ENCODE measurements at regions of chr1 and their contacts with region 1.

Region 1: GRCh38 chr1:36187800-36188593 is 32.0 kb downstream of the MAP7D1 start:
- DNase-seq: peak; percentile 91
- ATAC-seq: peak; percentile 97
- H3K4me3 ChIP-seq: no peak overlapping the region
- H3K27ac ChIP-seq: peak overlapping the region; percentile 36
- H3K4me1 ChIP-seq: peaks cover 7% of the 10 kb centered on the region; the same call in 1 of the 2 replicates
- H3K27me3 ChIP-seq: no peaks in the 10 kb centered on the region
- CTCF ChIP-seq: peak; percentile 94

Region 2: DNA sequence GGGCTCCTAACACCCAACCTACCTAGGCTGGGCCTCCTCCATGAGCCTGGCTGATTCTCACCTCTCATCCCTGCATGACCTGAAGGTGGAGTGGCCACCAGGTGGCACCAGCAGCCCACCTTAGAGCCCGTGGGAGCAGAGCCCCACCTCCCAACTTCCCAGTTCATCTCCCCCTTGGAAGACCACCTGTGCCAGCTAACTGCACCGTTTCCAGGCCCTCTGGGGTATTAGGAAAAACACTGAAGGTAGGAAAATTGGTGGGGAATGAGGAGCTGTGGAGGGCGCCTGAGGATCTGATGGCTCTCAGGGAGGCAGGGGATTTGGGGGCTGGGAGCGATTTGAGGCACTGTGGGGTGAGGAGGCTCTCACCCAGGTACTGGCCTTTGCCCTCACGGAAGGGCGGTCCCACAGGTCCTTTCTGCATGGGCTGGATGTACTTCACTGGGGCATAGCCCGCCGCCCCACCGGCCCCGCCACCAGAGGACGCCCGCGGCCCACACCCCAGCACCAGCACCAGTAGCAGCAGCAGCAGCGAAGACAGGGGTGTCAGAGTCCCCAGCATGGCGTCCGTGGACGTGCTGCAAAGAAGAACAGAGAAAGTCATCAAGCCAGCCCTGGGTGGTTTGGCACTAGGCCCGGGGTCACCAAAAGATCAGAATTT is 88.2 kb before region 1 on chr1:
- CTCF ChIA-PET with region 1: no interaction called
- POLR2A ChIA-PET with region 1: no interaction called
- intact Hi-C with region 1: loop called (anchors 1 kb)
- DNase-seq: peak; percentile 85
- ATAC-seq: peak; percentile 90
- H3K4me3 ChIP-seq: no peak overlapping the region
- H3K27ac ChIP-seq: no peak overlapping the region
- H3K4me1 ChIP-seq: no peaks in the 10 kb centered on the region
- H3K27me3 ChIP-seq: no peaks in the 10 kb centered on the region
- CTCF ChIP-seq: peak; percentile 95

Region 3: GRCh38 chr1:36160949-36161485 is 27.0 kb before region 1 on chr1:
- CTCF ChIA-PET with region 1: interaction called, 3 read pairs
- POLR2A ChIA-PET with region 1: no interaction called
- intact Hi-C with region 1: loop called (anchors 1 kb)
- DNase-seq: peak; percentile 35
- ATAC-seq: peak; percentile 19
- H3K4me3 ChIP-seq: peak overlapping the region; percentile 14; the same call in 1 of the 2 replicates
- H3K27ac ChIP-seq: peak overlapping the region; percentile 46
- H3K4me1 ChIP-seq: peaks cover 47% of the 10 kb centered on the region
- H3K27me3 ChIP-seq: no peaks in the 10 kb centered on the region
- CTCF ChIP-seq: peak; percentile 58

Region 4: DNA sequence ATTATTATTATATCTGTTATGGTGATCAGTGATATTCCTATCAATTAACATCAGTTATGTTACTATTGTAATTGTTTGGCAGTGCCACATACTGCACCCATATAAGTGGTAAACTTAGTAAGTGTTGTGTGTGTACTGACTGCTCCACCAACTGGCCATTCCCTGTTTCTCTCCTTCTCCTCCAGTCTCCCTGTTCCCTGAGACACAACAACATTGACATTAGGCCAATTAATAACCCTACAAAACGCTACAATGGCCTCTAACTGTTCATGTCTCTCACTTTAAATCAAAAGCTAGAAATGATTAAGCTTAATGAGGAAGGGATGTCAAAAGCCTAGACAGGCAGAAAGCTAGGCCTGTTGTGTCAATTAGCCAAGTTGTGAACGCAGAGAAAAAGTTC is 29.7 kb after region 1 on chr1:
- CTCF ChIA-PET with region 1: no interaction called
- POLR2A ChIA-PET with region 1: no interaction called
- intact Hi-C with region 1: loop called (anchors 1 kb)
- DNase-seq: peak; percentile 46
- ATAC-seq: peak; percentile 98
- H3K4me3 ChIP-seq: no peak overlapping the region
- H3K27ac ChIP-seq: no peak overlapping the region
- H3K4me1 ChIP-seq: no peaks in the 10 kb centered on the region
- H3K27me3 ChIP-seq: no peaks in the 10 kb centered on the region
- CTCF ChIP-seq: peak; percentile 59

Region 5: DNA sequence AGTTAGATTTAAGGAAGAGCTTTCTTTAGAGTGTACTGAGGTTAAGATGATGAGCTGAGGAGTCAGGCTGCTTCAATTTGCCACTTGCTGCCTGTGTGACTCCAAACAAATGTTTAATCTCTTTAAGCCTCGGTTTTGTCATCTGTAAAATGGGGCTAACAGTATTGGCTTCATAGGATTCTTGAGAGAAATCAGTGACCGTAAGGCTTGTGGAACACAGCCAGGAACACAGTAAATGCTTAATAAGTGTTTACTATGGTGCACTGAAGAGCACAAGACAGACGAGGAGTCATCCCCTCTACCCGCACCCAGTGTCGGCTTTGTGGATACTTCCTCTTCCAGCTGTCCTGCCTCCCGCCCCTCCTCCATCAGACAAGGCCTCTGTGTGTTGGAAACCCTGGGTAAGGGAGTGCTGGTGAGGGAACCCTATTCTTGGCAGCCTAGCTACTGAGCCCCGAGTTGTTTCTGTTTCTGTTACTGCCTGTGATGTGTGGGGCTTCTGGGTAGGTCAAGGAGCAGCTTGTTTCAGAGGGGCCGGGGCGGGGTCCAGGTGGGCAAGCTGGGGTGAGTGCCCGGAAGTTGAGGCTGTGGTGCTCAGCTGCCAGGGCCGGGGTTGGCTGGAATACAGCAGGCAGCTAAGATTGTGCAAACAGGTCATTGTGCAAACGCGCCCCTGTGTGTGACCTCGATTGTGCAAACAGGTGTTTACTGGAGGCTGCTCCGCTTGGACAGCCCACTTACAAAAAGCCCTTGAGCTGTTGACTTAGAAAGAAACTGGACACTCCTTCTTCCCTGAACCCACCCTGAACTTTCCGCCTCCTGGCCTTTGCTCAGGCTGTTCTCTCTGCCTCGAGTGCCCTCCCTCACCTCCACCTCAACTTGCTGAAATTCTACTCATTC is 298.7 kb after region 1 on chr1:
- CTCF ChIA-PET with region 1: no interaction called
- POLR2A ChIA-PET with region 1: no interaction called
- intact Hi-C with region 1: no loop called
- DNase-seq: peak; percentile 54
- ATAC-seq: peak; percentile 53
- H3K4me3 ChIP-seq: 0 out of 2 replicates have a peak overlapping the region, but pooled peaks have one; percentile 27
- H3K27ac ChIP-seq: 0 out of 2 replicates have a peak overlapping the region, but pooled peaks have one; percentile 15
- H3K4me1 ChIP-seq: peaks cover 13% of the 10 kb centered on the region
- H3K27me3 ChIP-seq: peaks cover 4% of the 10 kb centered on the region; the same call in 1 of the 2 replicates
- CTCF ChIP-seq: no peak